PC-3 (cell line): ENCODE measurements at regions of chr12 and their contacts with region 1.

Region 1: GRCh38 chr12:25924491-25925463 is 33.7 kb upstream of the RASSF8 start:
- DNase-seq: peak; percentile 100
- ATAC-seq: peak; percentile 83
- H3K4me3 ChIP-seq: peak overlapping the region; percentile 18; the same call in 1 of the 2 replicates
- H3K27ac ChIP-seq: peak overlapping the region; percentile 92
- H3K4me1 ChIP-seq: peaks cover 72% of the 10 kb centered on the region
- H3K27me3 ChIP-seq: no peaks in the 10 kb centered on the region
- CTCF ChIP-seq: 0 out of 2 replicates have a peak, but pooled peaks have one; percentile 27

Region 2: DNA sequence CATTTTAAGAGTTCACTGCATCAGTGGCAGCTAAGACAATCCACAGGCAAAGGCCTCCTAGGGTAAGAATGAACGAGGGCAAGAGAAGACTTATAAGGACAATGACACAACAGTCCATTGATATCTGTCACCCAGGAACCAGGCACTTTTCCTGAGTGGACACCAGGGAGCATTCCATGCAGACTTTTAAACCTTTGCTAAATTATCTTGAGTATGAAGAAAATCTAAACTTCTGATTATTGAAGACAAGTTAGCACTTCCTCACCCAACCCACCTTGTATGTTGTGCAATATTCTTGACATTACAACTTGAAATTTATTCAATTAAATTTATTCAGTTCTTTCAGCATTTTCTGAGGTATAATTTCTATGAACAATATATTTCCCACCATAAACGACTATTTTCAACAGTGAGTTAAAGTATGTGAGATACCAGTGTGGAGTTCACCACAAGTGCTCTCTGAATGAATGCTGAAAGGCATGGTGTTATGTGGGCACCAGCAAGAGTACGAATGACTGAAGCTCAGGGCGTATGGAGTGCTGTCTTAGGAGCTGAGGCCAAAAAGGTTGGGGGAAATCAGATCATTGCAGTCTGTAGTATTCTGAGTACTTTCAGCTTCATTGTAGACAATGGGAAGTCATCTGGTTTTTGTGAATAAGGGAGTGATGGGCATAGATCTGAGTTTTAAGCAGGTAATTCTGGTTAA is 247.4 kb before region 1 on chr12:
- CTCF ChIA-PET with region 1: no interaction called
- POLR2A ChIA-PET with region 1: no interaction called
- intact Hi-C with region 1: loop called (anchors 2 kb)
- DNase-seq: peak; percentile 46
- ATAC-seq: peak; percentile 74
- H3K4me3 ChIP-seq: no peak overlapping the region
- H3K27ac ChIP-seq: no peak overlapping the region
- H3K4me1 ChIP-seq: peaks cover 5% of the 10 kb centered on the region; the same call in 1 of the 2 replicates
- H3K27me3 ChIP-seq: no peaks in the 10 kb centered on the region
- CTCF ChIP-seq: peak; percentile 52

Region 3: GRCh38 chr12:25769076-25769945 is 155.5 kb before region 1 on chr12:
- CTCF ChIA-PET with region 1: no interaction called
- POLR2A ChIA-PET with region 1: no interaction called
- intact Hi-C with region 1: loop called (anchors 1 kb)
- DNase-seq: peak; percentile 92
- ATAC-seq: peak; percentile 98
- H3K4me3 ChIP-seq: no peak overlapping the region
- H3K27ac ChIP-seq: peak overlapping the region; percentile 40
- H3K4me1 ChIP-seq: peaks cover 28% of the 10 kb centered on the region
- H3K27me3 ChIP-seq: no peaks in the 10 kb centered on the region
- CTCF ChIP-seq: no peak

Region 4: DNA sequence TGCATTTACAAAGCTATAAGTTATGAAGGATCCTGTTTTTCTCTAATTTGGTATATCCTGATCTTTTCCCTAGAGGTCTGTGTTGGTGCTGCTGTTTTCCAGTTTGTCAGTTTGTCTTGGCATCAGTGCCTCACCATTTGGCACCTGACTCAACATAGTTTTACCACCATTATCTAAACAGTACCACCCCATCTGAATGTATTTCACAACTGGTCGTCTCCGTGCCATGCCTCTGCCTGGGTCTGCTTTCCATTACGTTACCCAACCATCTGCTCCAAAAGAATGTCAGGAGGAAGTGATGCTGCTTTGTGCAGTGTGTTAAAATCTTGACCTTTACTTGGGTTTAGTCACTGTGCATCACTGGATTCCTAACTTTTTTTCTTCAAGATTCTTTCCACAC is 95.6 kb before region 1 on chr12:
- CTCF ChIA-PET with region 1: no interaction called
- POLR2A ChIA-PET with region 1: no interaction called
- intact Hi-C with region 1: loop called (anchors 1 kb)
- DNase-seq: peak; percentile 99
- ATAC-seq: peak; percentile 92
- H3K4me3 ChIP-seq: no peak overlapping the region
- H3K27ac ChIP-seq: peak overlapping the region; percentile 84
- H3K4me1 ChIP-seq: peaks cover 37% of the 10 kb centered on the region
- H3K27me3 ChIP-seq: no peaks in the 10 kb centered on the region
- CTCF ChIP-seq: peak; percentile 30; the same call in 1 of the 2 replicates

Region 5: DNA sequence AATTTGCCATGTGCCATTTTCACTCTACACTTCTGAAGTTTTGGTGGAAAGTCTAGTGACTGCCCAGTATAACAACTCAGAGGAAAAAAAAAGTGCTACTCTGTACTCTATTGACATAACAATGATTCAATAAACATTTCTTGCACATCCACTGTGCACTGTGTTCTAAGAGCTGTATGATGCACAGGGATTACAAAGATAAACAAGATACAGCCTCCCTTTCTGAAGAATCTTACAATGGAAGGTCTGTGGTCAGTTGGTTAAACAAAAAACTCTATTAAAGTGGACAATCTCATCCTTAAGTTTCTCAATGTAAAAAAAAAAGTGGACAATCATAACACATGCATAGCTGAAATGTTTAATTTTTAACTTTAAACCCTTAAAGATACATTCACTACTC is 72.0 kb before region 1 on chr12:
- CTCF ChIA-PET with region 1: no interaction called
- POLR2A ChIA-PET with region 1: no interaction called
- intact Hi-C with region 1: loop called (anchors 1 kb)
- DNase-seq: peak; percentile 95
- ATAC-seq: peak; percentile 100
- H3K4me3 ChIP-seq: no peak overlapping the region
- H3K27ac ChIP-seq: peak overlapping the region; percentile 66
- H3K4me1 ChIP-seq: peaks cover 26% of the 10 kb centered on the region
- H3K27me3 ChIP-seq: no peaks in the 10 kb centered on the region
- CTCF ChIP-seq: no peak

Region 6: GRCh38 chr12:25935355-25936144 is 10.8 kb after region 1 on chr12:
- CTCF ChIA-PET with region 1: no interaction called
- POLR2A ChIA-PET with region 1: no interaction called
- intact Hi-C with region 1: no loop called
- DNase-seq: no peak
- ATAC-seq: no peak
- H3K4me3 ChIP-seq: no peak overlapping the region
- H3K27ac ChIP-seq: no peak overlapping the region
- H3K4me1 ChIP-seq: no peaks in the 10 kb centered on the region
- H3K27me3 ChIP-seq: no peaks in the 10 kb centered on the region
- CTCF ChIP-seq: no peak

Region 7: GRCh38 chr12:25997201-25997963 is 72.6 kb after region 1 on chr12:
- CTCF ChIA-PET with region 1: no interaction called
- POLR2A ChIA-PET with region 1: no interaction called
- intact Hi-C with region 1: loop called (anchors 1 kb)
- DNase-seq: peak; percentile 100
- ATAC-seq: peak; percentile 80
- H3K4me3 ChIP-seq: peak overlapping the region; percentile 12; the same call in 1 of the 2 replicates
- H3K27ac ChIP-seq: peak overlapping the region; percentile 27
- H3K4me1 ChIP-seq: peaks cover 43% of the 10 kb centered on the region
- H3K27me3 ChIP-seq: no peaks in the 10 kb centered on the region
- CTCF ChIP-seq: no peak

Region 8: DNA sequence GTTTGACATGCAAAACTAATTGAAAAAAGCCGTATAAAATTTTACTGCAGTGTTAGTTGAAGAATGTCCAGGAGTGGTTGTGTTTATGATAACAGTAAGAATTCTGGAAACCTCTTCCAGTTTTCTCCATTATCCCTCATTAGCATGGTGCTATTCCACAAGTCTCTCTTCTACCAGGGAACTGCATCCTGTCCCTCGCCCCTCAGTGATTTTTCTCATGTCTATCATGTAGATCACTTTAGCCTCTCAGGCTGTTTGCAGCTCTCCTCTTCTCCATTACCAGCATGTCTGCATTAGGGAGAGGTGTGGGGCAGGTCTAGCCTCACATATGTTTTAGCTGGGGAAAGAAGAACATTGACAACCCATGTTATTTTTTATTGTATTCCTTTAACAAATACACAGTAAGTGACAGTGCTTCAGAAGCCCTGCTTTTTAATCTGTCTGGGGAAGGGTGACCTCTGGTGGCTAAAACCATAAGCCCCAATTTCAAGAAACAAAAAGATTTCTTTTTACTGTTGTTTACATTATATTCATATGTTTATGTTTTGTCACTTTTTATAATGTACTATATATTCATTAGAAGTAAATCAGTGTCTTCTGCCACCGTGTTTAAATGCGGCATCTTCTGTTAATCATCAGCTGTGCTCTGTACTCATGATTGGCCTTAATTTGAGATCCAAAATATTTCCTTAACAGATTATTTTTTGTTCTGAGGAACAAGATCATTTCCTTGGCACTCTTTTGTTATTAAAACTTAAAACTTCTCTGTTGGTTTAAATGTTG is 104.4 kb after region 1 on chr12:
- CTCF ChIA-PET with region 1: no interaction called
- POLR2A ChIA-PET with region 1: interaction called, 3 read pairs
- intact Hi-C with region 1: loop called (anchors 2 kb)
- DNase-seq: peak; percentile 85
- ATAC-seq: peak; percentile 56
- H3K4me3 ChIP-seq: no peak overlapping the region
- H3K27ac ChIP-seq: no peak overlapping the region
- H3K4me1 ChIP-seq: peaks cover 29% of the 10 kb centered on the region
- H3K27me3 ChIP-seq: no peaks in the 10 kb centered on the region
- CTCF ChIP-seq: peak; percentile 97